ENCODE measurements at regions of chr12 and their contacts with region 1.

Region 1: GRCh38 chr12:85866986-85867776 is 6.9 kb upstream of the NTS start:
- DNase-seq: peak; percentile 30
- ATAC-seq: peak; percentile 30
- H3K4me3 Mint-ChIP-seq: no peak overlapping the region
- H3K27ac Mint-ChIP-seq: no peak overlapping the region
- H3K4me1 Mint-ChIP-seq: no peaks in the 10 kb centered on the region
- H3K27me3 Mint-ChIP-seq: no peaks in the 10 kb centered on the region

Region 2: GRCh38 chr12:85076688-85077430 is 790.3 kb before region 1 on chr12:
- CTCF ChIA-PET with region 1: no interaction called
- POLR2A ChIA-PET with region 1: no interaction called
- intact Hi-C with region 1: loop called (anchors 1 to 5 kb)
- DNase-seq: no peak
- ATAC-seq: peak; percentile 60
- H3K4me3 Mint-ChIP-seq: no peak overlapping the region
- H3K27ac Mint-ChIP-seq: no peak overlapping the region
- H3K4me1 Mint-ChIP-seq: no peaks in the 10 kb centered on the region
- H3K27me3 Mint-ChIP-seq: no peaks in the 10 kb centered on the region

Region 3: DNA sequence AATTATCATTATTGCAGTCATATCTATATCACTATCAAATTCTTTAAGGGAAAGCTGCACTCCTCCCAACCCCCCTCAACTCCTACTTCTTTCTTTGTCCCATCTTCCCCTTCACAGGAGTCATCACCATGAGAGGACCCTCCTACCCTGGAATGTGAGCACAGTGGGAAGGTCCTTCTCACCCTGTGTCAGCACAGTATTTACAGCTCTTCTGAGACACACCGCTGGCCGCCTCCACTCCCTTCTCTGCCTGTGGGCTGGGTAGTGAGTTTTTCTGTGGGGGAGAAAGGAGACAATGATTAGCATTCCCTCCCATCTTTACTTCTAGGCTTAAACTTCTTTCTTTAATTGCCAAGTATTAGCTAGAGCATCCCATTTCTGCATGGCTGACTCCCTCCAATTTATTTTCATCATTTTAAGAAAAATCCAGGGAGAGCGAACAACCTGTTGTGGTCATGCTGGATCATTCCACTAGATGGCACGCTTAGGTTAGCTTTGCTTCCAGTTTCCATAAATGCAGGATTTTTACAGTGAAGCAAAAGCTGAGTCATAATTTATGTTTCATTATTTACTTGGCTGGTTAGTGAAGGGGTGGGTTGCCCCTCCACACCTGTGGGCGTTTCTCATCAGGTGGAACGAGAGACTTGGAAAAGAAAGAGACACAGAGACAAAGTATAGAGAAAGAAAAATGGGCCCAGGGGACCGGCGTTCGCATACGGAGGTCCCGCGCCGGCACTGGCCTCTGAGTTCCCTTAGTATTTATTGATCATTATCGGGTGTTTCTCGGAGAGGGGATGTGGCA is 398.6 kb before region 1 on chr12:
- CTCF ChIA-PET with region 1: interaction called, 10 read pairs
- POLR2A ChIA-PET with region 1: no interaction called
- intact Hi-C with region 1: loop called (anchors 1 kb)
- DNase-seq: peak; percentile 61
- ATAC-seq: peak; percentile 80
- H3K4me3 Mint-ChIP-seq: peak overlapping the region; percentile 56
- H3K27ac Mint-ChIP-seq: peak overlapping the region; percentile 49
- H3K4me1 Mint-ChIP-seq: peaks cover 14% of the 10 kb centered on the region
- H3K27me3 Mint-ChIP-seq: peaks cover 6% of the 10 kb centered on the region

Region 4: GRCh38 chr12:85575120-85576096 is 291.8 kb before region 1 on chr12:
- CTCF ChIA-PET with region 1: interaction called, 12 read pairs
- POLR2A ChIA-PET with region 1: no interaction called
- intact Hi-C with region 1: loop called (anchors 1 to 2 kb)
- DNase-seq: peak; percentile 53
- ATAC-seq: peak; percentile 68
- H3K4me3 Mint-ChIP-seq: no peak overlapping the region
- H3K27ac Mint-ChIP-seq: no peak overlapping the region
- H3K4me1 Mint-ChIP-seq: no peaks in the 10 kb centered on the region
- H3K27me3 Mint-ChIP-seq: no peaks in the 10 kb centered on the region

Measured in activated CD4-positive, alpha-beta T cell treated with anti-CD3 and anti-CD28 coated beads for 36 hours (primary cell).